Lower leg skin (tissue), 4 donors: ENCODE measurements at regions of chr15 and their contacts with region 1.

Region 1: DNA sequence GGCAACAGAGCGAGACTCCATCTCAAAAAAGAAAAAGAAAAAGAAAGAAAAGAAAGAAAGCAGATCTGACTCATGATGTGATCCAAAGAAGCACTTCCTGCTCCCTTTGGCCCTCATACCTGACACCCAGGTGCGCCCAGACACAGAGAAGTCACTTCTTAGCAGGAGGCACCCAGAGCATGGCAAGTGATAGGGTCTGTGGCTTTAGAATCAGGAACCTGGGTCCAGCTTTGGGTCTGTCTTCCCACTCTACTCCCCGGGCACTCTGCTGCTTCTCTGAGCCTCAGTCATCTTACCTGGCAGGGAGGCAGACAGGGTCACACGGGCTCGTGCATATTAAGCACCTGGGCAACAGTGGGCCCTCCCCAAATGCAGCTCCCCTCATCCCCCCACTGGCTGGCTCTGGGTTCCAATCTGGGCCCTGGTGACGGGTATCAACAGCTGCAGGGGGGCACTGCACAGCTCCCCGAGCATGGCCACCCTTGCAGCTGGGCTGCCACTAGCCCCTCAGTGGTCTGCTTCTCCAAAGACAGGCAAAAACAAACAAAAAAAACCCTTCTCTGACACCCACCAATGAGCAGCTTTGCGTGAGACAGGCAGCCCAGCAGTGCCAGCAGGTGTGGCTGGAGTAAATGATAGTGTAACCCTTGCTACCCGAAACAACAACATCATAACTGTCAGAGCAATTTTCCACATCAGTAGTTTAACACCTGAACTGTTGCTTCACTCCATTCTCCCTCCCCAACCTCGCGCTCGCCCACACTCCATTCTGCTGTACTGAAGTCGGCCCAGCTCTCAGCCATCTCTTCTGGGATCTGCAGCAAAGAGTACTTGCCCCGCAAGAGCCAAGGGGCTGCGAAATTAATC is 99.8 kb downstream of the MEGF11 start:
- DNase-seq: no peak
- H3K4me3 ChIP-seq: no peak overlapping the region
- CTCF ChIP-seq: no peak
- POLR2A ChIP-seq: no peak

Region 2: GRCh38 chr15:66126031-66126441 is 27.7 kb before region 1 on chr15:
- intact Hi-C with region 1: no loop called
- DNase-seq: no peak
- H3K4me3 ChIP-seq: no peak overlapping the region
- CTCF ChIP-seq: no peak
- POLR2A ChIP-seq: no peak

Region 3: GRCh38 chr15:66308531-66308930 is 154.7 kb after region 1 on chr15:
- intact Hi-C with region 1: no loop called
- DNase-seq: no peak
- H3K4me3 ChIP-seq: no peak overlapping the region
- CTCF ChIP-seq: no peak
- POLR2A ChIP-seq: no peak

Region 4: GRCh38 chr15:67521029-67521811 is 1367.4 kb after region 1 on chr15 and contains the start of gene C15orf61:
- intact Hi-C with region 1: loop called (anchors 10 kb)
- DNase-seq: peak; percentile 84 to 96
- H3K4me3 ChIP-seq: peak within 1 kb of the TSS; percentile 90
- CTCF ChIP-seq: no peak
- POLR2A ChIP-seq: peak in 1 of 2 donors; percentile 27
- total RNA-seq, gene C15orf61: 8.2 to 19.0 (median 13.5) TPM